ENCODE measurements at regions of chr4 and their contacts with region 1.

Region 1: DNA sequence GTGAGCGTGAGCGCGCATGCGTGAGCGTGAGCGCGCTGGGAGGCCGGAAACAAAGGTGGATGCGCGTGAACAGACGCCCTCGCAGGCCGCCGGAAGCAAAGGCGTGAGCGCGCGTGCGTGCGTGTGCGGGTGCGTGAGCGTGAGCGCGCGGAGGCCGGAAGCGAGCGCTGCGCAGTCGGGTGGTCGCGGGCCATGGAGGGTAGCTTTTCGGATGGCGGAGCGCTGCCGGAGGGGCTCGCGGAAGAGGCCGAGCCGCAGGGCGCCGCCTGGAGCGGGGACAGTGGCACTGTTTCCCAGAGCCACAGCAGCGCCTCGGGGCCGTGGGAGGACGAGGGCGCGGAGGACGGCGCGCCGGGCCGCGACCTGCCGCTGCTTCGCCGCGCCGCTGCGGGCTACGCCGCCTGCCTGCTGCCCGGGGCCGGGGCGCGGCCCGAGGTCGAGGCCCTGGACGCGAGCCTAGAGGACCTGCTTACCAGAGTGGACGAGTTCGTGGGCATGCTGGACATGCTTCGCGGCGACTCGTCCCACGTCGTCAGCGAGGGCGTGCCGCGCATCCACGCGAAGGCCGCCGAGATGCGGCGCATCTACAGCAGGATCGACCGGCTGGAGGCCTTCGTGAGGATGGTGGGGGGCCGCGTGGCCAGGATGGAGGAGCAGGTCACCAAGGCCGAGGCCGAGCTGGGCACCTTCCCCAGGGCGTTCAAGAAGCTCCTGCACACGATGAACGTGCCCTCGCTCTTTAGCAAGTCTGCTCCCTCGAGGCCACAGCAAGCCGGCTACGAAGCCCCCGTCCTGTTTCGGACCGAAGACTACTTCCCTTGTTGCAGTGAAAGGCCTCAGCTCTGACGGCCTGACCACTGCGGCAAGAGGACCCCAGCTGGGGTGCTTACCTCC is at the start of gene BLOC1S4:
- DNase-seq: peak; percentile 97
- H3K4me3 Mint-ChIP-seq: peak within 1 kb of the TSS; percentile 98
- H3K27ac Mint-ChIP-seq: peak within 1 kb of the TSS; percentile 99
- H3K4me1 Mint-ChIP-seq: peaks cover 23% of the 10 kb centered on the region
- H3K27me3 Mint-ChIP-seq: peaks cover 3% of the 10 kb centered on the region
- total RNA-seq, gene BLOC1S4: 20.1 and 21.4 TPM in 2 replicates

Region 2: DNA sequence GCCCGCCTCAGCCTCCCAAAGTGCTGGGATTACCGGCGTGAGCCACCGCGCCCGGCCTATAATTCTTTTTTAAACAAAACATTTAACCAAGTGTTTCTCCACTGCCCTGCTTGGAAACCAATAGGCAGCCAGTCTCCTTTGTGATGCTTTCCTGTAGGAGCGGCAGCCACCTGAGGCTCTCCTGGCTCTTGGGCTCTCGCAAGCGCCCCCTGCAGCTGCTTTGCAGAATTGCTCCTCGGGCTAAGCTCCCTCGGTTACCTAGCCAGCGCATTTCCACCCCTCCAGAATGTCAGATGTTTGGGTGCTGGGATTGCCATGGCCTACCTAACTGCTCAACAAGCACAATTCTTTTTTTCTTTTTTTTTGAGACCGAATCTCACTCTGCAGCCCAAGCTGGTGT is 14.9 kb before region 1 on chr4:
- intact Hi-C with region 1: no loop called
- DNase-seq: peak; percentile 82
- H3K4me3 Mint-ChIP-seq: no peak overlapping the region
- H3K27ac Mint-ChIP-seq: no peak overlapping the region
- H3K4me1 Mint-ChIP-seq: peaks cover 62% of the 10 kb centered on the region
- H3K27me3 Mint-ChIP-seq: no peaks in the 10 kb centered on the region

Region 3: GRCh38 chr4:6768539-6768905 is 52.3 kb after region 1 on chr4:
- intact Hi-C with region 1: no loop called
- DNase-seq: no peak
- H3K4me3 Mint-ChIP-seq: no peak overlapping the region
- H3K27ac Mint-ChIP-seq: no peak overlapping the region
- H3K4me1 Mint-ChIP-seq: peaks cover 13% of the 10 kb centered on the region
- H3K27me3 Mint-ChIP-seq: peaks cover 12% of the 10 kb centered on the region

Region 4: DNA sequence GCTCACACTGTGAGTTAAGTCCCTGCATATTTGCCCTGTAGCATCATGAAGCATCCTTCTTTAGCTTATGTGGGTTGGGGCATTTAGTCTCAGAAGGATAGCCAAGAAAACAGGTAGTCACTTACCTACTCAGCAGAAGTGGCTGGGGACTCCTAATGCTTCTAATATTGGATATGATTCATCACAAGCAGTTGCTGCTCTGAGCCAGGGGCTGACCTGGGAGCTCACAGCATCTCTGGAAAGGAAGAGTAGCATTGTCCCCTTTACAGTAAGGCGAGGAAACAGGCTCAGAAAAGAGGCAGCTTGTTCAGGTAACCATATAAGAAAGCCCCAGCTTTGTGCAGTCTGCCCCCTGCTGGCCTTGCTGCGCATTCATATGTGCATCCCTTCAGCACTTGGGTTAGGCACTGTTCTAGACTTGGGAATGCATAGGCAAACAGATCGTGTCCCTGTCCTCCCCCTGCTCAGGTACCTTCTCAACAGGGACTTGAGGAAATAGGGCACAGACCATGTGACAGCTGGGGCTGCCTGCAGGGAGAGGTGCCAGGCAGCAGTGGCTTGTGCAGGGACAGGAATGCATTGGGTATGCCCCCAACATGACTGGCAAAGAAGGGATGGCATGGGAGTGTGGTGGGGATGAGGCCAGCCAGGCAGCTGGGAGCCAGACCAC is 157.7 kb after region 1 on chr4:
- intact Hi-C with region 1: loop called (anchors 1 kb)
- DNase-seq: peak; percentile 93
- H3K4me3 Mint-ChIP-seq: no peak overlapping the region
- H3K27ac Mint-ChIP-seq: no peak overlapping the region
- H3K4me1 Mint-ChIP-seq: peaks cover 4% of the 10 kb centered on the region
- H3K27me3 Mint-ChIP-seq: no peaks in the 10 kb centered on the region

Region 5: DNA sequence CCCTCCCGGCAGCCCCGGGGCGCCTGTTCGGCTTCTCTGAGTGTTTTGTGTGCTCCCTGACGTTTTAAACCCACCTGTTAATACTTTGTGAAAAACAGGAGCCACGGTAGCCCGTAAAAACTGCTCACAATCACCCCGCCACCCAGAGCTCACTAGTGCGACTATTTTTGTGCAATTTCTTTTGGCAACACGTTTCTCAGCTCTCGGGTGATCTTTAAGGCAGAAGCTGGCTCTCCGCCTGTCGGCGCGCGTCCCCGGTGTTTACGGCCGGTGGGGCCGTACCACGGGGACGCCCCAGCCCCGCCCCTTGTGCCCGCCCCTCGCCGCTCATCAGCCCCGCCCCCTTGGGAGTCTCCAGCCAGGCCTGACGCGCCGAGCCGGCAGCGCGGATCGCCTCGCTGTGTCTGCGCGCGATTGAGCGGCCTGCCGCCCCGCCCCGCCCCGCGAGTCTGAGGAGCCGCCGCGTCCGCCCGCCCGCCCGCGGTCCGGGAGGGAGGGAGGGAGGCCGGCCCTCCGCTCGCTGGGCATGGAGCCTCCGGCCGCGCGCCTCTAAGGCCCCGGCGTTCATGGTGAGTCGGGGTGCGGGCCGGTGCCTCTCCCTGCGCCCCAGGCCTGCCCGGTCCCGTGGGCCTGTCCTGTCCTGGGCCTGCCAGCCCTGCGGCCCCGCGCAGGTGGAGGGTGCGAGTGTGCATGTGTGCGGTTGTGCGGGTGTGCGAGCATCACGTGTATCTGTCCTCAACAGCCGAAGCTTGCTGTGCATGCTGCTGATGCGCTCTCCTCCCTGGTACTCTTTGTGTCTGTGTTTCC is 270.7 kb after region 1 on chr4:
- intact Hi-C with region 1: loop called (anchors 5 kb)
- DNase-seq: peak; percentile 98
- H3K4me3 Mint-ChIP-seq: peak overlapping the region; percentile 96
- H3K27ac Mint-ChIP-seq: peak overlapping the region; percentile 95
- H3K4me1 Mint-ChIP-seq: peaks cover 72% of the 10 kb centered on the region
- H3K27me3 Mint-ChIP-seq: no peaks in the 10 kb centered on the region

Region 6: DNA sequence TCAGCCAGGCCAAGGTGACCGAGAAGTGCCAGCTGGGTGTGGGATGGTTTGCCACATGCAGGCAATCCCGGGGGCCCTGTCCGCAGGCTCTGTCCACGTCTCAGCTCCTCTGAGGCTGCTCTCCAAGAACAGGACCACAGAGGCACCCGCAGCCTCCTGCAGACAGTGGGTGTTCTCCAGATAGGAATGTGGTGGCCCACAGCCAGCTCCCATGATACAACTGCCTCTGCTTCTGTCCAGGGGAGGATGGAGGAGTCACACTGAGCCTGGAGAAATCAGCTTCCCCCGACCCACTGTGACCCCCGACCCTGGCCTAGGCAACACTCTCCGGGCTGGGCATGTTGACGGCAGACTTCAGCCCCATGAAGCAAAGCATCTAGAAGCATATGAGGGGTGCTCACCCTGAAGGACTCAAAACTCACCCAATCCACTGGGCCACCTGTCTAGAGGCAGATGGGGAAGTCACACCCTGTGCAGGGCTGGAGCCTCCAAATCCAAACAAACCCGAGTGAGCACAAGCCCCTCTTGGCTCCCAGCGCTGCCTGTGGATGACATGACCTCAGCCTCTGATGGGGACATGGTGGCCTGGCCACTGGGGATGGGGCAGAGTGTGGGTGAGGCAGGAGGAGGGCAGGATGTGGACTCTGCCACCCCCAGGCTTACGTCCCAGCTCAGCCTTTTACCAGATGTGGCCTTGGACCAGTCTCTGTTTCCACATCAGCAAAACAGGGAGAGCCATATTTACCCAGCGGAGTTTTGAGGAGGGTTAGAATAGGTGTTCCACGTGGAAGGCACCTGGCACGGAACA is 616.2 kb after region 1 on chr4:
- intact Hi-C with region 1: loop called (anchors 5 kb)
- DNase-seq: no peak
- H3K4me3 Mint-ChIP-seq: no peak overlapping the region
- H3K27ac Mint-ChIP-seq: no peak overlapping the region
- H3K4me1 Mint-ChIP-seq: no peaks in the 10 kb centered on the region
- H3K27me3 Mint-ChIP-seq: no peaks in the 10 kb centered on the region

Region 7: GRCh38 chr4:7843831-7844593 is 1127.7 kb after region 1 on chr4:
- intact Hi-C with region 1: no loop called
- DNase-seq: peak; percentile 90
- H3K4me3 Mint-ChIP-seq: no peak overlapping the region
- H3K27ac Mint-ChIP-seq: no peak overlapping the region
- H3K4me1 Mint-ChIP-seq: peaks cover 17% of the 10 kb centered on the region
- H3K27me3 Mint-ChIP-seq: no peaks in the 10 kb centered on the region